ENCODE measurements at regions of chr11 and their contacts with region 1.

Region 1: GRCh38 chr11:95150946-95151684 is 61.5 kb downstream of the ENDOD1 start:
- DNase-seq: peak; percentile 74 to 93 (median 90)
- ATAC-seq: peak; percentile 97
- H3K4me3 ChIP-seq: peak overlapping the region; percentile 91
- H3K4me3 Mint-ChIP-seq: peak overlapping the region; percentile 81 to 92 (median 88)
- H3K27ac ChIP-seq: peak overlapping the region; percentile 75
- H3K27ac Mint-ChIP-seq: peak overlapping the region; percentile 92 to 99 (median 96)
- H3K4me1 ChIP-seq: peaks cover 19 to 22% of the 10 kb centered on the region in 2 donors
- H3K4me1 Mint-ChIP-seq: peaks cover 22 to 53% (median 32%) of the 10 kb centered on the region in 7 donors
- H3K27me3 ChIP-seq: no peaks in the 10 kb centered on the region
- H3K27me3 Mint-ChIP-seq: peaks cover 0 to 5% (median 3%) of the 10 kb centered on the region in 5 donors

Region 2: DNA sequence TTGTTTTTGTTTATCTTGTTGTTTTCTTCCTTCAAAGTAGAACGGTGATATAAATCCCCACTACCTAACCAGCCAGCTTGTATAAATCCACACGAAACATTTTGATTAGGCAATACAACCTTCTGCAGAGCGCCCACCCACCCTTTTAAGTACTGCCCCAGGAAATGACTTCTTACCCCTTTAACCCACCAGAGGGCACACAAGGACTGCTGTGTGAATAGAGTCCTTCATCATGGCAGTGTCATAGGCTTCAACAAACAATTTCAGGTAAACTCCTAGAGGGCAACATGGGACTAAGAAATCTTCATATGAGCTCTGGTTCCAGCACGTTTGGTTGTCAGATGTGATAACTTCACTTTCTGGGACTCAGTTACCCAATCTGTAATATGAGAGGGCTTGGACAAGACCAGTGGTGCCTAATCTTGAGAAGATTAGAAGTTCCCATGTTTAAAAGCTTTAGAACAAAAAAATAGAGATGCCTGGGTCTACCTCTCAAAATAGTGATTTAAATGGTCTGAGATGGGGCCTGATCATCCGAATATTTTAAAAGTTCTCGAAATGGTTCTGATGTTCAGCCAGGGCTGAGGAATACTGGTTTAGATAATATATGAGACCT is 527.9 kb before region 1 on chr11:
- CTCF ChIA-PET with region 1: no interaction called
- POLR2A ChIA-PET with region 1: no interaction called
- intact Hi-C with region 1: loop called (anchors 1 kb)
- DNase-seq: peak in 8 of 9 donors; percentile 33 to 68 (median 55)
- ATAC-seq: peak; percentile 91
- H3K4me3 ChIP-seq: no peak overlapping the region
- H3K4me3 Mint-ChIP-seq: no peak overlapping the region
- H3K27ac ChIP-seq: no peak overlapping the region
- H3K27ac Mint-ChIP-seq: peak overlapping the region in 1 of 9 donors; percentile 2
- H3K4me1 ChIP-seq: no peaks in the 10 kb centered on the region
- H3K4me1 Mint-ChIP-seq: peaks cover 0 to 2% (median 0%) of the 10 kb centered on the region in 7 donors
- H3K27me3 ChIP-seq: no peaks in the 10 kb centered on the region
- H3K27me3 Mint-ChIP-seq: peaks cover 5 to 18% (median 13%) of the 10 kb centered on the region in 5 donors

Region 3: DNA sequence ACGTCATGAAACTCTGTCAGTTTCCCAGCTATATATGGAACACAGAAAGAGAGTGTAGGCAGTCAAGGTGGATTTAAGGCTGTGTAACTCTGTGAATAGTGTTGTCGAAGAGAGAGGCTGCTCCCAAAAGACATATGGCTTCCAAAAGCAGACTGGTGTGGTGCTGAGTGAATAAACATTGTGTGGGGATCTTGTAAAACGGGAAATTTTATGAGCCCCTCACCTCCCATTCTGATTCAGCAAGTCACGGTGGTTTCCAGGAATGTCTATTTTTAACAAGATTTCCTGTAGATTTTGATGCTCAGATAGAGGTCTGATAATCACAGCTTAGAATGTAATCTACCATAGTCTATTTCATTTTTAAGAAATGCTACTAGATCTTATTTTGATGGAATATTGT is 12.0 kb after region 1 on chr11:
- CTCF ChIA-PET with region 1: interaction called, 9 read pairs
- POLR2A ChIA-PET with region 1: interaction called, 14 read pairs
- intact Hi-C with region 1: no loop called
- DNase-seq: no peak
- ATAC-seq: no peak
- H3K4me3 ChIP-seq: no peak overlapping the region
- H3K4me3 Mint-ChIP-seq: peak overlapping the region in 1 of 10 donors; percentile 3
- H3K27ac ChIP-seq: no peak overlapping the region
- H3K27ac Mint-ChIP-seq: peak overlapping the region in 7 of 9 donors; percentile 13 to 85 (median 57)
- H3K4me1 ChIP-seq: peaks cover 2% of the 10 kb centered on the region in 2 donors
- H3K4me1 Mint-ChIP-seq: peaks cover 8 to 38% (median 25%) of the 10 kb centered on the region in 7 donors
- H3K27me3 ChIP-seq: no peaks in the 10 kb centered on the region
- H3K27me3 Mint-ChIP-seq: no peaks in the 10 kb centered on the region

Region 4: DNA sequence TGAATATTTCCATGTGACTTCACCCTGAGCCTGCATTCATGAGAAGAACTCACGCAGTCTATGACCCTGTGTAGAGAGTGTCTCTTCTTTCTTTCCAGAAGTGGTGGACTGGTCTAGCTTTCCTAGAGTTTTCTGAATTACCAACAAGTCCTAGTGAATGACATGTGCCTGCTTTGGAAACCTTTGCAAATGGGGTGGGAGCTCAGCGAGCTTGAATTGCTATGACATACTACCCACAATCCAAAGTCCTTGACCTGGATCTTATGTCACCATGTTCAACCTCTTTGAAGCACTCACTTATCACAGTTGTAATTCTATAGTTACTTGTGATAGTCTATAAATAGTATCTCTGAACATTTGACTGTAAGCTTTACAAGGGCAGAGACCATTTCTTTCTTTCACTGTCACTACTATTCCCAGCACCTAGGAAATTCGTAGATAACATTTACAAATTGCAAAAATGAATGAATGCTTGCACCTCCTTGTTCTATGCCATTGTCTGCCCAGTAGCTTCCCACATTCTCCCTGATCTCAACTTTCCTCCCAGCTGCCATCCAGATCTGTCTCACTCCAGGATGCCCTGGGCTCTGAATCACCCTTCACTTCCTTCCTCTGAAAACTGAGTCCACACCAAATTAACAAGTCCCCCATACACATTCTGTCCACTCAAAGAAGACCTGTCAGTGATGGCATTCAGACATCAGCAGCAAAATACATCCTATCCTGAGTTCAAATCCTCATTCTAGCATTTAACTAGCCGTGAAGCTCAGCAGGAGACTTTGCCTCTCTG is 281.8 kb after region 1 on chr11:
- CTCF ChIA-PET with region 1: interaction called, 4 read pairs
- POLR2A ChIA-PET with region 1: no interaction called
- intact Hi-C with region 1: loop called in 1 of 2 experiments (anchors 5 kb)
- DNase-seq: no peak
- ATAC-seq: no peak
- H3K4me3 ChIP-seq: no peak overlapping the region
- H3K4me3 Mint-ChIP-seq: no peak overlapping the region
- H3K27ac ChIP-seq: no peak overlapping the region
- H3K27ac Mint-ChIP-seq: no peak overlapping the region
- H3K4me1 ChIP-seq: no peaks in the 10 kb centered on the region
- H3K4me1 Mint-ChIP-seq: peaks cover 6 to 27% (median 16%) of the 10 kb centered on the region in 7 donors
- H3K27me3 ChIP-seq: no peaks in the 10 kb centered on the region
- H3K27me3 Mint-ChIP-seq: peaks cover 0 to 3% (median 0%) of the 10 kb centered on the region in 5 donors

Region 5: DNA sequence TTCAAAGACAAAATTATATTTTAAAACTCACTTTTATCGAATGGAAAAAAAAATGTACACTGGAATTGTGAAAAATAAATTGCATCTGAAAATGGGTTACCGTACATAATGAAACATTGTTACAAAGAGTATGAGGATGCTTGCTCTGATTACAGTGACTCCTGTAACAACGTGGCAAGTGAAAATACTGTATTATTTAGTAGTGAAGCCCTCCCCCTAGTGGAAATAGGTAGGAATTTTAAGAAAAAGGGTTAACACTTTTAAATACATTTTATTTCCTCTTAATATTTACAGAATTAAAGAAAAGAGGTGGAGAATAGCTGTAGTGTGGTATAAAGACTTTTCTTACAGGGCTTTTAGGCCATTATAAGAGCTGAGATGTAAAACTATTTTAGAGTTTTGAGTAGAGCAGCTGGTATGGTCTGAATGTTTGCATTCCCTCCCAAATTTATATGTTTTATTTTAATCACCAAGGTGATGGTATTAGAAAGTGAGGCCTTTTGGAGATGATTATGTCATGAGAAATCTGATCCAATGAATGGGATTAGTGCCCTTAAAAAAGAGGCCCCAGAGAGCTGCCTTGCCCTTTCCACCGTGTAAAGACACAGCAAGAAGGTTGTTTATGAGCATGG is 613.3 kb after region 1 on chr11:
- CTCF ChIA-PET with region 1: interaction called, 232 read pairs
- POLR2A ChIA-PET with region 1: interaction called, 12 read pairs
- intact Hi-C with region 1: loop called (anchors 1 kb)
- DNase-seq: peak in 7 of 9 donors; percentile 43 to 73 (median 68)
- ATAC-seq: peak; percentile 95
- H3K4me3 ChIP-seq: no peak overlapping the region
- H3K4me3 Mint-ChIP-seq: no peak overlapping the region
- H3K27ac ChIP-seq: no peak overlapping the region
- H3K27ac Mint-ChIP-seq: no peak overlapping the region
- H3K4me1 ChIP-seq: no peaks in the 10 kb centered on the region
- H3K4me1 Mint-ChIP-seq: peaks cover 0 to 9% (median 0%) of the 10 kb centered on the region in 7 donors
- H3K27me3 ChIP-seq: no peaks in the 10 kb centered on the region
- H3K27me3 Mint-ChIP-seq: peaks cover 0 to 19% (median 0%) of the 10 kb centered on the region in 5 donors

Region 6: DNA sequence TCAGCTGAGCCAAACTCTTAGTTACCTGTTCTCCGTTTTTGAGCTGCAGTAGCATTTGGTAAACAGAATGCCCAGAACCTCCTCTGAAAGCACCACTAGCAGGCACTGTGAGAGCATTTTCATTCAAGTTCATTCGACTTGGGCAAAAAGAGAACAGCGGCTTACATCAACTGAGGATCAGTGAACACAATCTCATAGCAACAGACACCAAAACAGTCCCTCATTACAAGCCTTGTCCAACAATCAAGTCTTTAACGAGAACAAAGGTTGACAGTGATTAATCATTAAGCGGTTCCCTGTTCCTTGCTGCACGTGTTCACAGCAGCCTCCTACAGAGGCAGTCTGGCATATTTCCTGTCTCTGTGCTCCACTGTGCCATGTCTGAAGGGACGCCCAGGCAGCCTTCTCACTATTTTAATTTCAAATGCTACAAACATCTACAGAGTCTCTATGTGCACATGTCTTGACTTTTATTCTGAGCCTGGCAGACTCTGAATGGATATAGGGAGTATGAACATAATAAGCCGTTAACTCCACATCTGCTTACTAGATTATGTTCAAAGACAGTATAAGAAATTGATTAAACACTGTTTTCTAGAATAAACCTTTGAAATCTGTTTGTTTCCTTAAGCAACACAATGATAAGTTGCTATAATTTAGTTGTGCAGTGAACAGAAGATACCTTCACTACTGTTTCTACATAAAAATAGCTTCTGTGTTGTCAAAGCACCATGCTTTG is 861.1 kb after region 1 on chr11:
- CTCF ChIA-PET with region 1: no interaction called
- POLR2A ChIA-PET with region 1: no interaction called
- intact Hi-C with region 1: loop called in 1 of 2 experiments (anchors 5 kb)
- DNase-seq: peak in 8 of 9 donors; percentile 23 to 89 (median 80)
- ATAC-seq: peak; percentile 83
- H3K4me3 ChIP-seq: no peak overlapping the region
- H3K4me3 Mint-ChIP-seq: peak overlapping the region; percentile 58 to 87 (median 71)
- H3K27ac ChIP-seq: peak overlapping the region; percentile 58
- H3K27ac Mint-ChIP-seq: peak overlapping the region in 6 of 9 donors; percentile 76 to 98 (median 96)
- H3K4me1 ChIP-seq: peaks cover 39 to 52% of the 10 kb centered on the region in 2 donors
- H3K4me1 Mint-ChIP-seq: peaks cover 12 to 50% (median 28%) of the 10 kb centered on the region in 7 donors
- H3K27me3 ChIP-seq: no peaks in the 10 kb centered on the region
- H3K27me3 Mint-ChIP-seq: no peaks in the 10 kb centered on the region

Region 7: GRCh38 chr11:96424693-96425092 is 1273.6 kb after region 1 on chr11:
- CTCF ChIA-PET with region 1: interaction called, 4 read pairs
- POLR2A ChIA-PET with region 1: no interaction called
- intact Hi-C with region 1: loop called (anchors 1 to 2 kb)
- DNase-seq: no peak
- ATAC-seq: no peak
- H3K4me3 ChIP-seq: no peak overlapping the region
- H3K4me3 Mint-ChIP-seq: no peak overlapping the region
- H3K27ac ChIP-seq: no peak overlapping the region
- H3K27ac Mint-ChIP-seq: no peak overlapping the region
- H3K4me1 ChIP-seq: no peaks in the 10 kb centered on the region
- H3K4me1 Mint-ChIP-seq: peaks cover 0 to 6% (median 0%) of the 10 kb centered on the region in 7 donors
- H3K27me3 ChIP-seq: peaks cover 0 to 3% of the 10 kb centered on the region in 2 donors
- H3K27me3 Mint-ChIP-seq: peaks cover 27 to 49% (median 44%) of the 10 kb centered on the region in 5 donors